Esophagus squamous epithelium (tissue), 5 donors: ENCODE measurements at regions of chr10 and their contacts with region 1.

Region 1: GRCh38 chr10:77386838-77387237 is 250.8 kb downstream of the KCNMA1 start:
- DNase-seq: no peak
- H3K4me3 ChIP-seq: no peak overlapping the region
- H3K27ac ChIP-seq: no peak overlapping the region
- H3K4me1 ChIP-seq: peaks cover 10 to 37% (median 15%) of the 10 kb centered on the region in 3 donors
- H3K27me3 ChIP-seq: peaks cover 0 to 30% (median 0%) of the 10 kb centered on the region in 4 donors
- CTCF ChIP-seq: no peak
- POLR2A ChIP-seq: no peak

Region 2: DNA sequence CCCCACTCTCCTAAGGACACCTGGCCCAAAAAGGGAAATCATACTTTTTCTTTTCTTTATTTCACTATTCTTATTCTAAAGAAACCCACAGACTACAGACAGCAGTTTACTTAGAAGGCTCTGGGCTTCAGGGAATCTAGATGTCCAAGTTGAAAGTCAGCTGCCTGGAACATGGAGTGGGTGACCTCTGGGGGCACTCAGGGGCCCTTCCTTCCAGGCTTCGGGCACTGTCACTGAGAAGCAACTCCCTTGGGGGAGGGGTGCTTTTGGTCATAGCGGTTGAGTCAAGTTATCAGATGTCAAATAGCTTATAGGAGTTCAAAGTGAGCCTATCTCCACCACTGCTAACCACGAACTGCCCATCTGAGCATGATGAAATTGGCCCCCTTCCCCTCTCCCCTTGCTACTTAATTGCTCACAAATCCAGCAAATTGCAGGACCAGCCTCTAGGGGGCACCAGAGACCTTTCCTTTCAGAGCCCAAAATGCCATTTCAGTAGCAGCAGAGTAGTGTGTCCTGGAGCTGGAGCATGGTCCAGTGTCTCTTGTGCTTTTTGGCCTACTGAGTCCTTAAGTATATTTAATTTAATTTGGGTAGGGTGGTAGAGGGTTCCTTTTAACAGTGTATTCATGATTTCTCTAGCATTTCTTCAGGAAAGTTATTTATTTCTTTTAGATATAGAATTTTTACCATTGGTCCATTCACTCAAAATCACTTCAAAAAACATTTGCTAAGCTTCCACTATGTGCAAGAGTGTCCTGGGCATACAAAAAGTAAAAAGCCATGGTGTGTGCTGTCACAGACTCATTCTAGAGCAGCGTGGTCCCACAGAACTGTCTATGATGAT is 213.0 kb before region 1 on chr10:
- intact Hi-C with region 1: loop called (anchors 10 kb)
- DNase-seq: no peak
- H3K4me3 ChIP-seq: no peak overlapping the region
- H3K27ac ChIP-seq: no peak overlapping the region
- H3K4me1 ChIP-seq: peaks cover 0 to 14% (median 0%) of the 10 kb centered on the region in 3 donors
- H3K27me3 ChIP-seq: peaks cover 0 to 4% (median 0%) of the 10 kb centered on the region in 4 donors
- CTCF ChIP-seq: peak; percentile 55 to 91 (median 88)
- POLR2A ChIP-seq: no peak

Region 3: GRCh38 chr10:77637859-77638765 is 251.3 kb after region 1 on chr10:
- intact Hi-C with region 1: loop called (anchors 5 kb)
- DNase-seq: no peak
- H3K4me3 ChIP-seq: peak overlapping the region; percentile 50 to 71 (median 63)
- H3K27ac ChIP-seq: peak overlapping the region; percentile 63 to 86 (median 76)
- H3K4me1 ChIP-seq: peaks cover 5 to 63% (median 6%) of the 10 kb centered on the region in 3 donors
- H3K27me3 ChIP-seq: peaks cover 0 to 79% (median 2%) of the 10 kb centered on the region in 4 donors
- CTCF ChIP-seq: peak in 1 of 6 experiments; percentile 5
- POLR2A ChIP-seq: no peak

Region 4: DNA sequence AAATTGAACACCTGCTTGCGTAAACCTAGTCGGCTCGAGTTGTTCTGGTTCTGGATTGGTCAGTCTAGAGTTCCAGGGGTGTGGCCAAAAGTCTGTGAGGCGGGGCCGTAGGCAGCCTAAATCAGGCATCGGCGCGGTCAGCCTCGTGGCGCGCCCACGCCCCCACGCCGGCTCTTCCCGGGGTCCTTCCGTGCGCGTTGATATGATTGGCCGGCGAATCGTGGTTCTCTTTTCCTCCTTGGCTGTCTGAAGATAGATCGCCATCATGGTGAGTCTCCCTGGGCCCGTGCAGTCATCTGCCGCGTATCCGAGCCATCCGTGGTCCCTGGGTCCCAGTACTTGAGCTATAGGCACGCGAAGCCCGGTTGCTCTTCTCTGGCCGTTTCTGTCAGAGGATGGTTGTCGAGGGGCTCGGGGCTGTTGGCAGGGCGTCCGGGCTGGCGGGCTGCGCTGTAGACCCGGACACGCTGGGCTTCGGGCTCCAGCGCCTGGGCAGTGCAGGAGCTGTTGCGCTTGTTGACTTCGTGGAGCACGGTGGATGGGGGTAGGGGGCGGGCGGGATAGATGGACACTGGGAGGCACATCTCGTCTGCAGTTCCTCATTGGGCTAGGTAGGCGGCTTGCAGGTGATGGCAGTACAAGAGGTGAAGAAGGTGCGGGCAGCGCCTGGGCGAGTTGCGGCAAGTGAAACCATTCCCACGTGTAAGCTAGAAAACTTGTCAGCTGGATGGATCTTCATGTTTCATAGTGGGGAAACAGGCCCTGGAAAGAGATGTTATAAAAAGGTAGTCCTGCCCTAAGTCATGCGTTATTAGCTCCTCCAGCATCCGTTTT is 647.0 kb after region 1 on chr10 and contains the start of gene RPS24:
- intact Hi-C with region 1: no loop called
- DNase-seq: peak; percentile 72
- H3K4me3 ChIP-seq: peak within 1 kb of the TSS; percentile 68 to 88 (median 85)
- H3K27ac ChIP-seq: peak within 1 kb of the TSS; percentile 84 to 90 (median 84)
- H3K4me1 ChIP-seq: peaks cover 15 to 61% (median 32%) of the 10 kb centered on the region in 3 donors
- H3K27me3 ChIP-seq: no peaks in the 10 kb centered on the region
- CTCF ChIP-seq: peak in 1 of 6 experiments; percentile 6
- POLR2A ChIP-seq: peak in 2 of 4 donors; percentile 79 to 81
- total RNA-seq, gene RPS24: 1,266 to 3,992 (median 2,440) TPM

Region 5: DNA sequence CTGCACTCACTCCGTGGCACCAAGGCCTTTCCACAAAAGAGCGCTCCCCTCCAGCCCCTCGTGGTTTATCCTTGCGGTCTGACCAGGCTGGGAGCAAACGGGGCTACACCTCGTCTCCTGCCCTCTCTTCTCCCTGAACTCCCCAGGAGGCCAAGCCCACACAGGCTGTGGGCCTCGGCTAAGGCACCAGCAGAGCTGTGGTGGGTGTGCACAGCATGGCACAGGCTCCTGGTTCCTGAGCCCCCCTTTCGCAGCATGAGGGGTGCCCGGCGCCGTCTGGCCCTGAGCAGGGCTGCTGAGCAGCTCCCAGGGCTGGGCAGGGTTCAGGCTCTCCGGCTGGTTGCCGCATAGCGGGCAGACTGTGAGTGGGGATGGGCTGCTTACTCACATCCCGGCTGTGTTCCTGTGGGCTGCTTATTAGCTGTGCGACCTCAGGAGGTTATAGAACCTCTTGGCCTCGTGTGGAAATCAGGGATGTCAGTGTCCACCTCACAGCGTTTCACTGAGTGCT is 1772.4 kb after region 1 on chr10:
- intact Hi-C with region 1: no loop called
- DNase-seq: no peak
- H3K4me3 ChIP-seq: no peak overlapping the region
- H3K27ac ChIP-seq: peak overlapping the region; percentile 59 to 96 (median 84)
- H3K4me1 ChIP-seq: peaks cover 41 to 100% (median 80%) of the 10 kb centered on the region in 3 donors
- H3K27me3 ChIP-seq: no peaks in the 10 kb centered on the region
- CTCF ChIP-seq: no peak
- POLR2A ChIP-seq: no peak